ENCODE measurements at regions of chr15 and their contacts with region 1.

Region 1: DNA sequence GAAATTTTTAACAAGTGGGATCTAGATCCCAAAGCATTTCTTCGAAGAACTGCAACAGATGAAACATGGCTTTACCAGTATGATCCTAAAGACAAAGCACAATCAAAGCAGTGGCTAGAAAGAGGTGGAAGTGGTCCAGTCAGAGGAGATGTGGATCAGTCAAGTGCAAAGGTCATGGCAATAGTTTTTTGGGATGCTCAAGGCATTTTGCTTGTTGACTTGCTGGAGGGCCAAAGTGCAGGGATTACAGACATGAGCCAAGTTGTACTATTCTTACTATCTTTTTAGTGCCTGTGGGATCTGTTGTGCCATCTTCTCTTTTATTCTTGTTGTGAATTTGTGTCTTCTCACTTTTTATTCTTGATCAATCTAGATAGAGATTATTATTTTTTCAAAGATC is 82.0 kb downstream of the REC114 start:
- DNase-seq: no peak
- H3K4me3 ChIP-seq: no peak overlapping the region
- H3K27ac ChIP-seq: no peak overlapping the region
- H3K4me1 ChIP-seq: no peaks in the 10 kb centered on the region
- H3K27me3 ChIP-seq: no peaks in the 10 kb centered on the region

Region 2: DNA sequence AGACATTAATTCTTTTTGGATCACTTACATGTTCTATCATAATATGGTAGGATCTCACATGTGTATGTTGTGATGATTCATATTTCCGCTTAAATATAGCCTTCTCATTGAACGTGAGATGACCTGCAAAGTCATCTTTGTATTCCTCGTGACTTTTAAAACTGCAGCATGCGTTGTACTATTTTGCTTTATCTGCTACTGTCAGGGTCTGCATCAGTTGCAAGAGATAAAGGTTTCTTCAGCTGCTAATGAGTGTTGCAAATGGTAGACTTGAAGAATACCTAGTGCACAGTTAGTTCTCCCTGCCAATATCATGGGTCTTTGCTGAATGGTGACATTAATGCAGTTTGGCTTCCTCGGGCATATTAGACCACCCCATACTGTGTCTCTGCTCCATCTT is 50.1 kb before region 1 on chr15:
- in situ Hi-C with region 1: loop called (anchors 5 kb)
- DNase-seq: no peak
- H3K4me3 ChIP-seq: no peak overlapping the region
- H3K27ac ChIP-seq: no peak overlapping the region
- H3K4me1 ChIP-seq: no peaks in the 10 kb centered on the region
- H3K27me3 ChIP-seq: peaks cover 24% of the 10 kb centered on the region; the same call in 1 of the 2 replicates

Region 3: DNA sequence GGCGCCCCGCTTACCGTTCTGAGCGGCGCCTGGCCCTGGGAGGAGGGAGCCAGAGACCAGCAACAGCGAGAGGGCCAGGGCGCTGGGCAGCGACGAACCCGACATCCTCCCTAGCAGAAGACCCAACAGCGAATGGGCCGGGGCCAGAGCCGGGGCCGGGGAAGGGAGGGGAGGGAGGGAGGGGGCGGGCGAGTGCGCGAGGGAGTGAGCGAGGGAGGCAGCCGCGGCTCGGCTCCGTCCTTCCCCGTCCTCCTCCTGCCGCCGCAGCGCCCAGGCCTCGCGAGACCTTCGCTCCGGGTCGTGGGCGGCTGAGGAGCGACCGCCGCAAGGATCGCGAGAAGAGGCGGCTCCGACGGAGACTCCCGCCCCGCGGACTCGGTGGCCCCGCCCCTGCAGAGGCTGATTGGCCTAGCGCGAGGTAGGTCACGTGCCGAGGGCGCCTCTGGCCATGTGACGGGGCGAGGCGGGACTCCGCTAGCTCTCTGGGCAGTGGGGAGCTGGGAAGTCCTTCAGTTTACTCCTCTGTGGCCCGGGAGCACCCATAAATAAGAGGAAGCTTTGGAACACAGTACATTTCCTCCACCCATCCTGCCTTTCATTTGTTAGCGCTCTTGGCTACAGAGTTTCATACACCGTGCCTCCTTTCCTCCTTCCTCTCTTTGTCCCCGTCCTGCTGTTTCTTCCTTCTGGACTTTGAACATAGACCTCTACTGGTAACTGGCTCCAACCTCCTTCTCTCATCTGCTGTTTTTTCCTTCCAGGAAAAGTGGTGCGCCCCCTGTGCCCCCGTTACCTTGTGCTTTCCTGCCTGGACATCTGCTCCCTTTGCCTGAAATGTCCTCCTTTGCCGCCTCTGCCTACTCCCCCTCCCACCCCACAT is 108.4 kb after region 1 on chr15 and contains the start of gene NPTN:
- in situ Hi-C with region 1: no loop called
- DNase-seq: peak; percentile 100
- H3K4me3 ChIP-seq: peak within 1 kb of the TSS; percentile 82
- H3K27ac ChIP-seq: peak within 1 kb of the TSS; percentile 99
- H3K4me1 ChIP-seq: peaks cover 50% of the 10 kb centered on the region
- H3K27me3 ChIP-seq: no peaks in the 10 kb centered on the region
- total RNA-seq, gene NPTN: 183 and 272 TPM in 2 replicates

Region 4: DNA sequence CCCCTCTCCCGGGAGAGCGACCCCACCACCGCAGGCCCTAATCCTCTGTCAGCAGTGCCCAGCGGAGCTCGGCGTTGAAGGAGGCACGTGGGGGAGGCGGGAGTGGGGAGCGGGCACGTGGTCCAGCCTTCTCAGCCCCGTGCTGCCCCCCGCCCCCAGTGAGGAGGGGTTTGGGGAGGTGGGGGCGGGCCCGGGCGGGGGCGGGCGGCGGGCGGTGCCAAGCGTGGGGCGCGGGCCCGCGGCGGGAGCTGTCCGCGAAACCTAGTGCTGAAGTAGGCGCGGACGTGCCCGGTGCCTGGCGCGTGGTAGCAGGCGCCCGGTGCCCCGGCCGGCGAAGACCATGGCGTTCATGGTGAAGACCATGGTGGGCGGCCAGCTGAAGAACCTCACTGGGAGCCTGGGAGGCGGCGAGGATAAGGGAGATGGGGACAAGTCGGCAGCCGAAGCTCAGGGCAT is 1301.5 kb after region 1 on chr15 and contains the start of gene CPLX3:
- in situ Hi-C with region 1: no loop called
- DNase-seq: peak; percentile 32
- H3K4me3 ChIP-seq: no peak within 1 kb of the TSS
- H3K27ac ChIP-seq: no peak within 1 kb of the TSS
- H3K4me1 ChIP-seq: no peaks in the 10 kb centered on the region
- H3K27me3 ChIP-seq: peaks cover 6% of the 10 kb centered on the region
- total RNA-seq, gene CPLX3: not detected in 2 replicates